Heart right ventricle (tissue), 16 donors: ENCODE measurements at regions of chr9 and their contacts with region 1.

Region 1: GRCh38 chr9:125003332-125003731 is 62.4 kb upstream of the GOLGA1 start:
- DNase-seq: no peak
- ATAC-seq: no peak
- H3K4me3 ChIP-seq: no peak overlapping the region
- H3K27ac ChIP-seq: no peak overlapping the region
- H3K4me1 ChIP-seq: no peaks in the 10 kb centered on the region
- H3K27me3 ChIP-seq: no peaks in the 10 kb centered on the region
- CTCF ChIP-seq: no peak

Region 2: GRCh38 chr9:125049212-125050049 is 46.1 kb after region 1 on chr9:
- intact Hi-C with region 1: loop called in 1 of 10 experiments (anchors 10 kb)
- DNase-seq: no peak
- ATAC-seq: no peak
- H3K4me3 ChIP-seq: no peak overlapping the region
- H3K27ac ChIP-seq: no peak overlapping the region
- H3K4me1 ChIP-seq: no peaks in the 10 kb centered on the region
- H3K27me3 ChIP-seq: no peaks in the 10 kb centered on the region
- CTCF ChIP-seq: no peak

Region 3: DNA sequence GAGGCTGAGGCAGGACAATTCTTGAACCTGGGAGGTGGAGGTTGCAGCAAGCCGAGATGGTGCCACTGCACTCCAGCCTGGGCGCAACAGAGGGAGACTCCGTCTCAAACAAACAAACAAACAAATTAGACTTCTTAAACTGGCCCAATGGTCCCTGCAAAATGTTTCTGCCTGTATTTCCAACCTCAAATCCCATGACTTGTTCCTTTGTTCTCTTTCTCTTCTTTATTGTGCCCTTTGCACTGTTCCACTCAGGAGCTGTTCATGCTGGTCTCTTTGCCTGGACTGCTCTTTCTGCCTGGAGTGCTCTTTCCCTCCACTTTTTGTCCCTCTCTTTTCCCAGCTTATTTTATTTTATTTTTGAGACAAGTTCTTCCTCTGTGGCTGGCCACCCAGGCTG is 201.1 kb after region 1 on chr9:
- intact Hi-C with region 1: no loop called
- DNase-seq: no peak
- ATAC-seq: no peak
- H3K4me3 ChIP-seq: no peak overlapping the region
- H3K27ac ChIP-seq: no peak overlapping the region
- H3K4me1 ChIP-seq: peaks cover 0 to 11% (median 7%) of the 10 kb centered on the region in 9 donors
- H3K27me3 ChIP-seq: no peaks in the 10 kb centered on the region
- CTCF ChIP-seq: no peak

Region 4: DNA sequence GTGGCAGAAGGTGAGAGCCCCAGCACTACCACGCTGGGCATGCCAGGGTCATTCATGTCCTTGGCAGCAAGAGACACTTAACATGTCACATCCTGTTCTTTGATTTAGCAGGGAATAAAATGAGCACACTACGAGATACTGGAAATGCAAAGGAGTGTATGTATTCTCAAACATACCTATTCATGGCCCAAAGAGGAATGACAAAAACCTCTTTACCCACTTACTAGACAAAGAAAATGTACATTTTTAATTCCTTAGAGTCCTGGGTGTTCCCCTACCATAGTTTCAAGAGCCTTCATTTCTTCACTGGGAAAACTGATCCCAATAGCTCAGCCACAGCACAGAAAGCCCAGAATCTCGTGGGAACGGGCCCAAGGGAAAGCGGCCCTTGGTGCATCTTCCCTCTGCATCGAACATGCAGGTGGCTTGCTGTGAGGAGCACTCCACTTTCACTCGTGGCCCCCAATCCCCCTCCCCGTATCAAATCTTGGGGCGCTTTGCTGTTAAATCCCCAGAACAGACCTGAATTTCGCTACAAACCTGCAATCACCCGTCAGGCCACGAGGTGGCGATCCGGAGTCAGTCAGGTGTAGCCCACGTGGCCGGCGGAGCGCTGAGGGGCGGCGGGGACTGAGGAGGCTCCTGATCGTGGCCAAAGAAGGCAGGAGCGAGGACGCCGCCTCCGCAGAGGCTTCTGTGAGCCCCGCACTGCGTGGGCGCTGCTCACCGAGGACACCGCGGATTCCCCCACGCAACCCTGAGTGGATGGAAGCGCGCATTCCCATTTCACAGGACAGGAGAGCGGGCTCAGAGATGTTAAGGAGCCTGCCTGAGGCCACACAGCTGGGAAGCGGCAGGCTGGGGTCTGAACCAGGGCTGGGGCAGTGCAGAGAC is 1701.8 kb after region 1 on chr9:
- intact Hi-C with region 1: loop called in 1 of 10 experiments (anchors 5 kb)
- DNase-seq: peak; percentile 68 to 78
- ATAC-seq: peak; percentile 57 to 88 (median 73)
- H3K4me3 ChIP-seq: peak overlapping the region in 7 of 10 donors; percentile 5 to 25 (median 15)
- H3K27ac ChIP-seq: no peak overlapping the region
- H3K4me1 ChIP-seq: peaks cover 6 to 16% (median 14%) of the 10 kb centered on the region in 9 donors
- H3K27me3 ChIP-seq: peaks cover 11 to 71% (median 58%) of the 10 kb centered on the region in 7 donors
- CTCF ChIP-seq: peak; percentile 75 to 90 (median 86)